Activated CD4-positive, alpha-beta T cell treated with anti-CD3 and anti-CD28 coated beads for 36 hours (primary cell): ENCODE measurements at regions of chr1 and their contacts with region 1.

Region 1: GRCh38 chr1:201481761-201482493 is 12.9 kb upstream of the PHLDA3 start:
- DNase-seq: peak; percentile 89
- ATAC-seq: peak; percentile 90
- H3K4me3 Mint-ChIP-seq: peak overlapping the region; percentile 58
- H3K27ac Mint-ChIP-seq: no peak overlapping the region
- H3K4me1 Mint-ChIP-seq: peaks cover 19% of the 10 kb centered on the region
- H3K27me3 Mint-ChIP-seq: peaks cover 15% of the 10 kb centered on the region

Region 2: DNA sequence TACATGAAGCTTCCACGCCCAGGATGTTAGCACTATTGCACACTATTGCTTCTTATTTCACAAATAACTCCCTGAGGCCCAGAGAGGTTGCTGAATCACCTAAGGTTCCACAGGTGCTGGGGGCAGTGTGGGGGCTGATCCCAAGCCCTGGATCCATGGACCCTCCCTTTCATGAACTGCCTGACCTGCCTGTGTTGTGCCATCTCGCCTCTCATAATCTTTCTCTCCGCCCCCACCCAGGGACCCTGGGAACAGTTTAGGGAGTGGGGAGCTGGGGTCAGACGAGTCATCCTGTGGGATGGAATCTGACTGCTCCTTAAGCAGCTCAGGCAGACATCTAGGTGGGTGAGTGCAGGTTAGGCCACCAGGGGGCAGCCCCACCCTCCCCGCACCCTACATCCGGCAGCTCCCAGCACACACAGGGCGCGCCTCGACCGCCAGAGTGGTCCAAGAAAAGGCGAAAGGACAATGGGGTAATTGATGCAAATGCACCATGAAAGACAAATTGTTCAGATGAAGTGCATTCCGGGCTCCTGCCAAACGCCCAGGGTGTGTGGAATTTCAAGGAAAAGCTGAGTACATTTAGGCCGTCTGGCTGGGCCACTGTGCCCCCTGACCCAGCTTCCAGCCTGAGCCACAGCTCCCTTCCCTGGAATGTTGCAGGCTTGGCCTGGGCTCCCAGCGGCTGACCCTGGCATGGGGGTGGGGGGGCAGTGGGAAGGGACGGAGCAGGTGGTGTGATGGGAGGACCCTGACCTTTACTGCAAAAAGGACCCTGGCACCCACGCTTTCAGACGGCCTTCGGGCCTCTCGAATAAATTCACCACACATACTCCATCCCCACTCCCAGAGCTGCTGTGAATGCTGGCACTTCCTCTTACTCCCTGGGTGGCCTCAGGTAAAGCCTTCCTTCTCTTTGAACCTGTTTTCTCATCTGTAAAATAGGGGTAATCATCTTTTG is 33.7 kb before region 1 on chr1:
- CTCF ChIA-PET with region 1: interaction called, 67 read pairs
- POLR2A ChIA-PET with region 1: interaction called, 3 read pairs
- intact Hi-C with region 1: loop called (anchors 1 kb)
- DNase-seq: peak; percentile 85
- ATAC-seq: peak; percentile 98
- H3K4me3 Mint-ChIP-seq: no peak overlapping the region
- H3K27ac Mint-ChIP-seq: no peak overlapping the region
- H3K4me1 Mint-ChIP-seq: peaks cover 12% of the 10 kb centered on the region
- H3K27me3 Mint-ChIP-seq: peaks cover 9% of the 10 kb centered on the region

Region 3: GRCh38 chr1:201495471-201496295 is 13.8 kb after region 1 on chr1:
- CTCF ChIA-PET with region 1: interaction called, 45 read pairs
- POLR2A ChIA-PET with region 1: interaction called, 3 read pairs
- intact Hi-C with region 1: no loop called
- DNase-seq: no peak
- ATAC-seq: no peak
- H3K4me3 Mint-ChIP-seq: no peak overlapping the region
- H3K27ac Mint-ChIP-seq: no peak overlapping the region
- H3K4me1 Mint-ChIP-seq: no peaks in the 10 kb centered on the region
- H3K27me3 Mint-ChIP-seq: no peaks in the 10 kb centered on the region

Region 4: GRCh38 chr1:201506556-201507359 is 24.8 kb after region 1 on chr1 and contains the start of gene CSRP1:
- CTCF ChIA-PET with region 1: interaction called, 216 read pairs
- POLR2A ChIA-PET with region 1: interaction called, 4 read pairs
- intact Hi-C with region 1: loop called in 1 of 2 experiments (anchors 1 kb)
- DNase-seq: peak; percentile 92
- ATAC-seq: peak; percentile 94
- H3K4me3 Mint-ChIP-seq: peak within 1 kb of the TSS; percentile 91
- H3K27ac Mint-ChIP-seq: peak within 1 kb of the TSS; percentile 89
- H3K4me1 Mint-ChIP-seq: peaks cover 31% of the 10 kb centered on the region
- H3K27me3 Mint-ChIP-seq: no peaks in the 10 kb centered on the region
- total RNA-seq, gene CSRP1: 49.2 to 50.7 TPM

Region 5: GRCh38 chr1:201530741-201531531 is 49.0 kb after region 1 on chr1:
- CTCF ChIA-PET with region 1: interaction called, 12 read pairs
- POLR2A ChIA-PET with region 1: no interaction called
- intact Hi-C with region 1: no loop called
- DNase-seq: peak; percentile 76
- ATAC-seq: peak; percentile 76
- H3K4me3 Mint-ChIP-seq: no peak overlapping the region
- H3K27ac Mint-ChIP-seq: no peak overlapping the region
- H3K4me1 Mint-ChIP-seq: peaks cover 7% of the 10 kb centered on the region
- H3K27me3 Mint-ChIP-seq: peaks cover 3% of the 10 kb centered on the region

Region 6: DNA sequence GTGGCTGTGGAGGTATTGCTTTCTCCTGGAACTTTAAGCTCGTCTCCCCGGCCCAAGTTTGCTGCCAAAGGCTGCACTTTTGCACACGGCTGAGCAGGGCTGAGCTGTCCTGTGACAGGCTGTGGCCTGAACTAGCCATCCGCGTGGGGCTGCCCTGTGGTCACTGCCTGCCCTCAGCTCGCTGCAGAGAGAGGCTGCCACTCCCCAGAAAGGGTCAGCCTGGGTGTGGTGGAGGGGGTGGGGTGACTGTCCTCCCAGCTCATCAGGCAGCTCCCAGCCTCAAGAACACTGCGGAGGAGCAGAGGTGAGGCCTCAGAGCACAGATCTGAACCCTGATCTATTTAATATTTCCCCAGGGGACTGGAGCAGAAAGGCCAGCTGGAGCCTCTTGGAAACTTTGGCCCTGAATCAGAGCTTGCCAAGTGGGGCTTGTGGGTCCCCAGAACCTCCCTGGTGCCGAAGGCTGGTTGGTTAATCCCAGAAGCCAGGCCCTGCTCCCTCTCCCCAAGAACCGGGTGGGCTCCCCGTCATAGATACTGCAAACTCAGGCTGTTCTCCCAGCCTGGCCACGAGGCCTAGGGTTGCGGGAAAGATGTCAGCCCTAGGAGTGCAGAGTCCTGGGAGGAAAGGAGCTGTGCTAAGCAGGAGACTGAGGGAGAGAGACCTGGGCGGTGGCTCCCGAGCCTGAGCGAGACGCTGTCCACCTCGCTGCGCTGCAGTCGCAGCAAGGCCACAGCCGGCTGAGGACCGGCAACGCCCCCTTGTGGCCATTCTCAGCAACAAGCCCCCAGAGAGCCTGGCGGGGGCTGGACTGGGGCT is 221.9 kb after region 1 on chr1:
- CTCF ChIA-PET with region 1: interaction called, 5 read pairs
- POLR2A ChIA-PET with region 1: no interaction called
- intact Hi-C with region 1: loop called in 1 of 2 experiments (anchors 1 kb)
- DNase-seq: peak; percentile 86
- ATAC-seq: peak; percentile 87
- H3K4me3 Mint-ChIP-seq: no peak overlapping the region
- H3K27ac Mint-ChIP-seq: no peak overlapping the region
- H3K4me1 Mint-ChIP-seq: no peaks in the 10 kb centered on the region
- H3K27me3 Mint-ChIP-seq: no peaks in the 10 kb centered on the region